HCT116 (cell line): ENCODE measurements at regions of chr20 and their contacts with region 1.

Region 1: GRCh38 chr20:7916648-7917047 is 23.6 kb downstream of the HAO1 start:
- DNase-seq: no peak
- ATAC-seq: no peak
- H3K4me3 ChIP-seq: no peak overlapping the region
- H3K27ac ChIP-seq: no peak overlapping the region
- H3K4me1 ChIP-seq: no peaks in the 10 kb centered on the region
- H3K27me3 ChIP-seq: no peaks in the 10 kb centered on the region
- CTCF ChIP-seq: no peak
- POLR2A ChIP-seq: no peak
- RAD21 ChIP-seq: no peak

Region 2: DNA sequence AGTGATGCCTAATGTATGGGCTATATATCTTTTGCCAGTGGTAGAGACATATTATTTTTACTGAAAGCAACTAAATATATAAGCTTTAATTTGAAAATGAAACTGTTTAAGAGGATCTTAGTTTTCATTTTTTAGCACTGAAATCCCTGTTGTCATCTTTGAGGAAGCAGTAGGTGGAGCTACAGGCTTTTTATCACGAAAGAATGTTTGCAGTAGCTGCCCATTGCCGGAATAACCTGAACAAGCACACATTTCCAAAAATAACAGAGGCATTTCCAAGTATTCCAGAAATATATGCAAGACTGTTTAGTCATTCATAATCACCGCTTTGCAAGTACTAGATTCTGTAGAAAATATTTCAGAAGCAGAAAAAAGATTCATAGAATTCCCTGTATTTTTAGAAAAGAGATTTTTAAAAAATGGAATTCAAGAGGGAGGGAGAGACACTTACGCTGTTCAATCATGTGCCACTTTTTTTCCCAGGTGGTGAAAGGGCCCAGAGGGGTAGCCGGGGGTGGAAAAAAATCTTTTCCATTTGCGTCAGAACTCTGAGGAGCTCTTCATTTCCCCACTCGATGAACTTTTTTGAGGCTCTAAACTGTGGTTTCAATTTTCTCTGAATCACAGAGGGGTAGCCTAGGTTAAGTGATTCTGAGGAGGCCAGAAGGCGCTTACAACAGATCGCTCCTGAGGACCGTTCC is 1651.3 kb before region 1 on chr20:
- CTCF ChIA-PET with region 1: no interaction called
- POLR2A ChIA-PET with region 1: no interaction called
- RAD21 ChIA-PET with region 1: no interaction called
- intact Hi-C with region 1: loop called (anchors 5 kb)
- DNase-seq: peak; percentile 7
- ATAC-seq: no peak
- H3K4me3 ChIP-seq: no peak overlapping the region
- H3K27ac ChIP-seq: no peak overlapping the region
- H3K4me1 ChIP-seq: no peaks in the 10 kb centered on the region
- H3K27me3 ChIP-seq: no peaks in the 10 kb centered on the region
- CTCF ChIP-seq: peak; percentile 15 to 44 (median 25); a peak in 4 of 6 replicates
- POLR2A ChIP-seq: no peak
- RAD21 ChIP-seq: peak; percentile 49